ENCODE measurements at regions of chr5 and their contacts with region 1.

Region 1: GRCh38 chr5:135829681-135830383 is 4.6 kb upstream of the SLC25A48 start:
- DNase-seq: peak in 5 of 6 donors; percentile 45 to 89 (median 73)
- ATAC-seq: peak; percentile 44 to 60 (median 50)
- H3K4me3 ChIP-seq: no peak overlapping the region
- H3K27ac ChIP-seq: no peak overlapping the region
- H3K4me1 ChIP-seq: no peaks in the 10 kb centered on the region
- H3K27me3 ChIP-seq: no peaks in the 10 kb centered on the region
- CTCF ChIP-seq: peak; percentile 56 to 66 (median 59)

Region 2: DNA sequence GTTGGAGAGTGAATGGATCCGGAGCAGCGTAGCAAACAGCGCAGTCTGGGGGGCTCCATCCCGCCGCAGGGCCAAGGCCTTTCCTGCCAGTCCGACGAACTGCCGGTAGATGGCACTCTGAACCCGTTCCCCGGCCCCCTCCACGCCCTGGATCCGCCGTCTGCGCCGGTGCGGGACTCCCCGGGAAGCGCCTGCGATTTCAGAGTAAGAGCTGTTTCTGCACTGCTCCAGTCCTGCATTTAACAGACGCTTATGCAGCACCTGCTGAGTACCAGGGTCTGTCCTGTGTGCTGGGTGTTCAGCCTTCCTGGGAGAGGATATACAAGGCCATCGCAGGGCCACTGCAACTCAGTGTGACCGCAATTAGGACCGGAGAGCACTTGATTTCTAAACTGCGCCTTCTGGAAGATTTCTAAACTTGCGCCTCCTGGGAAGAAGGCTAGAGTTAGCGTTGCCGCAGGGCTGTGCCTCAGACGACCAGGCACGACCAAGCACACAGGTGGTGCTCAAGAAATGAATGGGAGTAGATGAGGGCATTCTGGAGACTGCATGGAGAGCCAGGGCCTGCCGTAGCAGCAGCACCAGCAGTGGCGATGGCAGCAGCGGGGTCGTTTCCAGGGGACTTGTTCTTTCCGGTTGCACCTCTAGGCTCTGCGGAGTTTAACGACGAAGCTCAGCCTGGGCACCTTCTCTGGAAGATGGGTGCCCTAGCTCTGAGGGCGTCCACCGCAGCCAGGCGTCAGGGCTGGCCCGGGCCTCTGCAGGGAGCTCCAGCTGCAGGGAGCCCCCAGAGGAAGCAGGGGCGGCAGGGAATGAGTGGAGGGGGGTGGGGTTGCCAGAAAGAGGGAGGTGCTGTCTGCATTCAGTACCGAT is 363.4 kb before region 1 on chr5:
- intact Hi-C with region 1: loop called in 1 of 3 experiments (anchors 10 kb)
- DNase-seq: peak; percentile 51 to 91 (median 70)
- ATAC-seq: peak; percentile 91 to 98 (median 97)
- H3K4me3 ChIP-seq: peak overlapping the region in 1 of 4 donors; percentile 8
- H3K27ac ChIP-seq: no peak overlapping the region
- H3K4me1 ChIP-seq: peaks cover 0 to 3% (median 0%) of the 10 kb centered on the region in 3 donors
- H3K27me3 ChIP-seq: peaks cover 0 to 4% (median 0%) of the 10 kb centered on the region in 4 donors
- CTCF ChIP-seq: peak; percentile 52 to 85 (median 69)

Region 3: DNA sequence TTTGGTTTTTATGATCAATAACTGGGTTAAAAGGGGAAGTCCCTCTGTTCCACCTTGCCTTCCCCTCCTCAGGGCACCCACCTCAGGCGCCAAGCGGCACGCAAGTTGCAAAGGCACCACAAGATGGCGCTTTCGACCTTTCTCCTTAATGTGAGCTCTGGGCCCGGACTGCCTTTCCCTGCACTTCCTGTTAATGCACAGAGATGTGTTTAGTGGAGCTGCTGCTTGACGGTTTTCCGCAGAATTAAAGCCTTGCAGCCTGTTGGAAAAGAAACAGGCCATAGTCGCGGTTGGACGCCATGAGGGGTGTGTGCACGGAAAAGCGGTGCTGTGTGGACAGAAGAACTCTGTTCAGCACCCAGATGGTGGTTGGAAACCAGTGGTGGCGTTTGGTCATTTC is 269.0 kb before region 1 on chr5:
- intact Hi-C with region 1: loop called in 2 of 3 experiments (anchors 5 kb)
- DNase-seq: peak in 5 of 6 donors; percentile 57 to 89 (median 71)
- ATAC-seq: peak; percentile 84 to 100 (median 98)
- H3K4me3 ChIP-seq: no peak overlapping the region
- H3K27ac ChIP-seq: no peak overlapping the region
- H3K4me1 ChIP-seq: no peaks in the 10 kb centered on the region
- H3K27me3 ChIP-seq: peaks cover 0 to 7% (median 2%) of the 10 kb centered on the region in 4 donors
- CTCF ChIP-seq: peak; percentile 49 to 74 (median 70)

Region 4: GRCh38 chr5:135565725-135566421 is 264.0 kb before region 1 on chr5:
- intact Hi-C with region 1: loop called in 2 of 3 experiments (anchors 5 kb)
- DNase-seq: peak; percentile 41 to 94 (median 78)
- ATAC-seq: peak; percentile 80 to 95 (median 88)
- H3K4me3 ChIP-seq: no peak overlapping the region
- H3K27ac ChIP-seq: no peak overlapping the region
- H3K4me1 ChIP-seq: no peaks in the 10 kb centered on the region
- H3K27me3 ChIP-seq: peaks cover 0 to 3% (median 0%) of the 10 kb centered on the region in 4 donors
- CTCF ChIP-seq: peak; percentile 68 to 90 (median 88)